Activated CD4-positive, alpha-beta T cell treated with anti-CD3 and anti-CD28 coated beads, Interleukin-2, amount 10 ng/mL, durations not matched to agents 7 days and 5 days (primary cell): ENCODE measurements at regions of chr5 and their contacts with region 1.

Region 1: DNA sequence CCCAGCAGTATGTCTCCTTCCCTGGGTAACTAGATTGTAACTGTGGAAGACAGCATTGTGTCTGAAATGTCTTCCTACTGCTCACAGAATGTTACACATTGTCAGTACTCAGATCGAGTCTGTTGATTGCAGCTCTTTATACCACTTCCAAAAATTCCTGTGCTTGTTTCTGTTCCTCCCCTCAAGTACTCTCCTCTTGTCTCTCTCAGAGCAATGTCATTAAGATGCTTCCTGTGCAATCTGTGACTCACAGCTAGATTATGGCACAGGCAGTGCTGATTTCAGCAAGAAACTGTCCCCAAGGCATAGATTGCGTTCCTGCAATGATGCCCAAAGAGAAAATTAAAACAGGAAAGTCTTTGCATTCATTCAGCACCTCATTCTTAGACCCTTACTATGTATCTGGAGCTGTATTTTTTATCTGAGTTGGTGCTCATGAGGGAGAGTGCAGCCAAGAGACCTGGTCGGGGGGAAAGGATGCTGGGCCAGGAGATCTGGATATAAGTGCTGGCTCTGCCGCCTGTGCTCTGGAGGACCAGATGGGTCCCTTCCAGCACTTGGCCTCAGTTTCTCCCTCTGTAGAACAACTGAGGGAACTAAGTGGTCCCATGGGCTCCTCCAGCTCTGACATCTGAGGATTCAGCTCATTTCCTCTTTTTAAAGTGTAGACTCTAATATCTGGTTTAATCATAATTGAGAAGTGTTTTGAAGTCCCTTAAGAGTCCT is 40.8 kb upstream of the GNPDA1 start:
- DNase-seq: no peak
- H3K4me3 Mint-ChIP-seq: no peak overlapping the region
- H3K27ac Mint-ChIP-seq: no peak overlapping the region
- H3K4me1 Mint-ChIP-seq: peaks cover 7% of the 10 kb centered on the region
- H3K27me3 Mint-ChIP-seq: no peaks in the 10 kb centered on the region

Region 2: DNA sequence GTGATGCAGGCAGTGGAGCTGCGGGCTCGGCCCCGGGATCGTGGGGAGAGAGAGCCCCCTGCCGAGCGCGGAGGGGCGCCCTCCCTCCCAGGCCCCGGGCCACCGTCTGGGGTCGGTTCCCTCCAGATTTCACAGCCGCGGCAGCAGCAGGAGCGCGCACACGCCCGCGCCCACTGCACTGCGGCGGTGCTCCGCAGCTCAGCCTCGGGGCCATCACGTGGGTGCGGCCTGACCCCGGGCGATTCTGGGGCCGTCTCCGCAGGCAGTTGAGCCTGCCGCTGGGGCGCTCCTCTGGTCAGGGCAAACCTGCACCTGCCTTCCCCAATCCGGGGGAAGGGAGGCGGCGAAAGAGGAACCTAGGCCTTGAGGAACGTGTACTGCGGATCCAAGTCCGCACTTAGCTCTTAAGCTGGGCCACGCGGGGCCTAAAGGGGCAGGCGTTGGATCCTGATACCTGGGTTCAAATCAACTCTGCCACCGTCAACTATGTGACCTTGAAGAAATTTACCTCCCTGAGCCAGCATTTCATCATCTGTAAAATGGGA is 139.3 kb before region 1 on chr5:
- CTCF ChIA-PET with region 1: no interaction called
- POLR2A ChIA-PET with region 1: no interaction called
- DNase-seq: no peak
- H3K4me3 Mint-ChIP-seq: no peak overlapping the region
- H3K27ac Mint-ChIP-seq: no peak overlapping the region
- H3K4me1 Mint-ChIP-seq: peaks cover 7% of the 10 kb centered on the region
- H3K27me3 Mint-ChIP-seq: peaks cover 38% of the 10 kb centered on the region

Region 3: DNA sequence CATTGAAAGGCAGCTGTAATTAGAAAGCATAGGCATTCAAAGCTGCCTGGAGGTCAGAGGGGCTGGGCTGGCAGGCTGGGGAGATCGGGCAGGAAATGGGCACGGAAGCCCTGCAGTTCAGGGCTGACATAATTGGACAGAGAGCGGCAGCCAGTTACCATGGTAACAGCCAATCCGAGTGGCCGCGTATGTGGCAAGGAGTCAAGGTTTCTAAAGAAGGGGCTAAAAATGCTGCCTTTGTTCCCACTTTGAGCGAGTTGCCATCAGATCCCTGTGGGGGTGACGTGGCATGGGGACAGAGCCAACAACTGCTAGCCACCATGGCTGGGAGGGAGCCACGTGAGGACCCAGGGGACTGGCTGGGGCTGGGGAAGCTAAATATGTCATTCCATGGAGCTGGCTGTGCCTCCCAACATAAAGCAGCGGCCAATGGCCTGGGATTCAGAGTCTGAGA is 10.3 kb after region 1 on chr5:
- CTCF ChIA-PET with region 1: interaction called, 15 read pairs
- POLR2A ChIA-PET with region 1: no interaction called
- DNase-seq: peak; percentile 42
- H3K4me3 Mint-ChIP-seq: no peak overlapping the region
- H3K27ac Mint-ChIP-seq: peak overlapping the region; percentile 48
- H3K4me1 Mint-ChIP-seq: peaks cover 13% of the 10 kb centered on the region
- H3K27me3 Mint-ChIP-seq: no peaks in the 10 kb centered on the region